Posterior cingulate gyrus (tissue), 11 donors: ENCODE measurements at regions of chr16 and their contacts with region 1.

Region 1: DNA sequence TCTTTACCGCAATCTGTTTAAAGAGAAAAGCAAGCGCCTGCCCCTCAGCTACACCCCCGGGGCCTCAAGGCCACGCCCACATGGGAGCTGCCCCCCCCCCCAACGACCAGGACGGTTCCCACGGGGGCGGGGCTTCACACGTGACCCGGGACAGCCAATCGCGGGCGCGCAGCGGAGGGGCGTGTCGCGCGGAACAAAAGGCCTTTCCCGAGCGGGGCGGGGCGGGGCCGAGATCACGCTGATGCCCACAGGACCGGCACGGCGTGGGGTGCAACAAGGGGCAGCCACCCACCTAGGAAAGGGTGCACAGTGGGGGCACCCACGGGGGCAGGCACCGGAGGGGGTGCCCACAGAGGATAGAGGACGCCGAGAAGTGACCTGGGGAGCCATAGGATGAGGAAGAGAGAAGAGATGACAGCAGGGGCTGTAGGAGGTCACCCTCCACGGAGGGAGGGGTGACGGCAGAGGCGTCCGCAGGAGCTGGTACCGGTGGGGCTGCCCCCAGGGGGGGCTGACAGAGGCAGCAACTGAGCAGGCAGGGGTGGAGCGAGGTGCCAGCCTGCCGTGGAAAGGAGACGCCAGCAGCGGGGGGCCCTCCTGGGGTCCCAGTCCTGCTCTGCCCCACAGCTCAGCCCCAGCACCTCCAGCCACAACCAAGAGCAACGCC is 6.2 kb downstream of the UNKL start:
- DNase-seq: peak; percentile 90 to 99 (median 97)

Region 2: DNA sequence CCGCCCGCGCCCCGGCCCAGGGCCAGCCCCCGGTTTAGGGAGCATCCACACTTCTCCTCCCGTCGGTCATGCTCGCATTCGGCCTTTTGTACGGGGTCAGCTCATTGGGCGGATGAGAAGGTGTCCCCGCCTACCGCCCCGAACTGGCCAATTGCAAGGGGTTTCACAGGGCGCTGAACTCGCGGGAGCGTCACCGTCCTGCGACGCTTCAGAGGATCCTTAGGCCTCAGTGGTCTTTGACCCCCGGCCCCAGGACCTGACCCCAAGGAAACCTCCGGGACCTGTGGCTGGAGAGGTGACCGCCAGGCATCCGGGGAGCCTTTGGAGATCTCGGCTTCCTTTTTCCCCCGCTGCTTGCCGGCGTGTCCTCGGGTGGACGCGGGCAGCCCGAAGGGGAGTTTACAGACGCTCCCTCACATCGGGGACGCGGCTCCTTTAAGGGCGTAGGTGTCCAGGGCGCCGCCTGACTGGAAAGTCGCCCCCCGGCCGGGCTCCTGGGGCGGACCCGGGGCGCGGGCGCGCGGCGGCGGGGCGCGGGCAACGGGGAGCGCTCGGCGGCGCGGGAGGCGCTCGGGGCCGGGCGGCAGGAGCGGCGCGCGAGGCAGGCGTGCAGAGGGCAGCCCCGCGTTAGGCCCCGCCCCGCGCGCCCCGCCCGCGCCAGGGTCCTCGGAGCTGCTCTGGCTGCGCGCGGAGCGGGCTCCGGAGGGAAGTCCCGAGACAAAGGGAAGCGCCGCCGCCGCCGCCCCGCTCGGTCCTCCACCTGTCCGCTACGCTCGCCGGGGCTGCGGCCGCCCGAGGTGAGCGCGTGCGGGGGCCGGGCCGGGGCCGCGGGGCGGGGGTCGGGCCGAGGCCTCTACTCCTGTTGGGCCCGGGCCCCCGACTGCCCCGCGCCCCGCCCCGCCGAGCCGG is 99.1 kb before region 1 on chr16 and contains the start of gene UBE2I:
- intact Hi-C with region 1: loop called (anchors 10 kb)
- DNase-seq: peak; percentile 98 to 100 (median 99)

Region 3: DNA sequence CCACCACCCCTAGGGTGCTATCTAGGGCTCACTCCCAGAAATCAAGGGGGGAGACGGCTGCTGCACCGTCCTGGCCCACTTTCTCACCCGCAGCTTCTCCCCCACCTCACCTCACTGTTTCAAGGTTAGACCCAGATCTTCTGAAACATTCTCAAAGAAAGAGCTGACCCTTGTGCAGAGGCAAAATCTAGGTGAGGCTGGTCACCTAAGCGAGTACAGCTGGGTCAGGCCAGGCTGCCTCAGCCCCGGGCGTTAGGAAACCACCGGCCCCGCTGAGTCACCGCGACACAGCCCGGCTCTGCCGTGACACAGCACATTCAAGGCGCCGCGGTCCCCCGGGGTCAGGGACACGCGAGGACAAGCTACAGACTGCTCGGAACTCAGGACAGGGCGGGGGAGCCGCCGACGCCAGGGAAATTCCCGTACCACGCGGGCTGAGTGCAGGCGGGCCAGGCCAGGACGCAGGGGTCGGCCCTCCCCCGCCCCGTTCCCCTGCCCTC is 29.4 kb before region 1 on chr16:
- intact Hi-C with region 1: no loop called
- DNase-seq: peak in 9 of 10 donors; percentile 22 to 93 (median 63)